Uterus (tissue), 4 donors: ENCODE measurements at regions of chr4 and their contacts with region 1.

Region 1: GRCh38 chr4:120049732-120050494 is 16.7 kb downstream of the MAD2L1 start:
- DNase-seq: peak; percentile 72 to 82
- H3K4me3 ChIP-seq: peak overlapping the region in 1 of 2 donors; percentile 19
- H3K27ac ChIP-seq: peak overlapping the region; percentile 63 to 70
- H3K4me1 ChIP-seq: no peaks in the 10 kb centered on the region
- H3K27me3 ChIP-seq: no peaks in the 10 kb centered on the region
- CTCF ChIP-seq: peak; percentile 77 to 80 (median 79)
- POLR2A ChIP-seq: no peak

Region 2: DNA sequence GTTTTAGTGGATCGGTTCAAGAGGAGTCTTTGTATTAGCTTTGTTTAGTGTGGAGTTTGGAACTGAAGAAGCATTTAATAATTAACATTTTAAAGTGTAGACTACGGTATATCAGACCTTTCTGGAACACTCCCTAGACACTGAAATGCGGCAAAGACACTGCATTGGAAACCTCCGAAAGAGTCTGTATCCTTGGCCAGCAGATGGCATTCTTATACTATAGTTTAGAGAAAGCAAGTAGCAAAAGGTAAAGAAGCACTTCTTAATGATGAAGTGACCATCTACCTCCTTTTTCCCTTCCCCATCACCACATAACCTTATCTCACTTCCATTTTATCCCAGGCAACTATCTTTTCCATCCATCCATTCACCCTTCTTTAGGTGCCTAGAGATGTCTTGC is 735.6 kb before region 1 on chr4:
- intact Hi-C with region 1: loop called (anchors 10 kb)
- DNase-seq: no peak
- H3K4me3 ChIP-seq: no peak overlapping the region
- H3K27ac ChIP-seq: no peak overlapping the region
- H3K4me1 ChIP-seq: no peaks in the 10 kb centered on the region
- H3K27me3 ChIP-seq: no peaks in the 10 kb centered on the region
- CTCF ChIP-seq: peak in 3 of 4 experiments; percentile 28 to 57 (median 35)
- POLR2A ChIP-seq: no peak

Region 3: DNA sequence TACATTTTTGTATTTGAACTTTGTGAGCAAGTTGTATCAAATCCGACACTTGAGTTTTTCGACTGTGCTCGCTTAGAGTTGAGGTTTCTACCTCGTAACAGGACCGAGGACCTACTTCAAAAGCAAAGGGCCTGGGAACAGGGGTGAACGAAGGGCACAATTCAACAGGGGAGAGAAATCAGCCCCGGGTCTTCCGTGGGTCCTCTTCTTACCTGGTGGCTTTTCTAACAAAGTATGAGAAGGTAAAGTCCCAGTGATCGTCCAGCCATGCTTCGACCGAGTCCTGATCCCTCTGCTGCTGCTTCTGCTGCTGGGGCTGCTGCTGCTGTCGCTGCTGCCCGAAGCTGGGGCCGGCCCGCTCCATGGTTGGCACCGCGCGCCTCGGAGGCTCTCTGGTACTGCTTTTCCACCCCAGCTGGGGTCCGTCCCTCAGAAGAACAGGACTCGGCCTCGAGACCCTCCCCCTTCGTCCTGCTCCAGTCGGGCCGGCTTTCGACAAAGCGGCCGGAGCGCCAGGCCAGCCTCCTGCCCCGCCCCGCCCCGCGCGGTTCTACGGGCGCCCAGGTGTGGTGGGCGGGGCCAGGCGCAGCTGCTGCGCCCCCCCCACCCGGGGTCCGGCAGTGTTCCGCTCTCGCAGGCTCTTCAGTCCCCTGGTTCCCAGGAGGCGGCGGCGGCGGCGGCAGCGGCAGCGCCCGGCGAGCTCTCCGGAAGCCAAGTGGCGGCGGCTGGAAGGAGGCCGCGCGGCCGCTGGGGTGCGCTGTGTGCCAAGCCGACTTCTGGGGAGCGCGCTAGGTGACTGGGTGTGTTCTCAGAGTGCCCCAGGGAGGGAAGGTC is 421.4 kb before region 1 on chr4 and contains the start of gene PDE5A:
- intact Hi-C with region 1: no loop called
- DNase-seq: peak; percentile 61 to 73
- H3K4me3 ChIP-seq: peak within 1 kb of the TSS; percentile 56 to 61
- H3K27ac ChIP-seq: peak within 1 kb of the TSS; percentile 85 to 92
- H3K4me1 ChIP-seq: no peaks in the 10 kb centered on the region
- H3K27me3 ChIP-seq: no peaks in the 10 kb centered on the region
- CTCF ChIP-seq: peak; percentile 51 to 88 (median 76)
- POLR2A ChIP-seq: peak in 1 of 2 donors; percentile 46
- total RNA-seq, gene PDE5A: 13.5 to 192 (median 84.2) TPM

Region 4: GRCh38 chr4:119748853-119749252 is 301.1 kb before region 1 on chr4:
- intact Hi-C with region 1: no loop called
- DNase-seq: no peak
- H3K4me3 ChIP-seq: no peak overlapping the region
- H3K27ac ChIP-seq: no peak overlapping the region
- H3K4me1 ChIP-seq: no peaks in the 10 kb centered on the region
- H3K27me3 ChIP-seq: no peaks in the 10 kb centered on the region
- CTCF ChIP-seq: no peak
- POLR2A ChIP-seq: no peak

Region 5: GRCh38 chr4:120446051-120446567 is 396.2 kb after region 1 on chr4:
- intact Hi-C with region 1: no loop called
- DNase-seq: no peak
- H3K4me3 ChIP-seq: no peak overlapping the region
- H3K27ac ChIP-seq: no peak overlapping the region
- H3K4me1 ChIP-seq: no peaks in the 10 kb centered on the region
- H3K27me3 ChIP-seq: no peaks in the 10 kb centered on the region
- CTCF ChIP-seq: no peak
- POLR2A ChIP-seq: no peak